B cell (primary cell): ENCODE measurements at regions of chr6 and their contacts with region 1.

Region 1: GRCh38 chr6:27388293-27389197 is at the start of gene ZNF391:
- DNase-seq: peak; percentile 88
- ATAC-seq: peak; percentile 87
- H3K4me3 ChIP-seq: peak within 1 kb of the TSS; percentile 70 to 97 (median 94)
- H3K4me3 Mint-ChIP-seq: peak within 1 kb of the TSS; percentile 99
- H3K27ac ChIP-seq: peak within 1 kb of the TSS; percentile 64 to 83
- H3K27ac Mint-ChIP-seq: peak within 1 kb of the TSS; percentile 98
- H3K4me1 ChIP-seq: peaks cover 10 to 16% of the 10 kb centered on the region in 2 donors
- H3K4me1 Mint-ChIP-seq: peaks cover 17% of the 10 kb centered on the region
- H3K27me3 ChIP-seq: peaks cover 0 to 2% (median 0%) of the 10 kb centered on the region in 4 experiments
- H3K27me3 Mint-ChIP-seq: peaks cover under 1% of the 10 kb centered on the region
- CTCF ChIP-seq: no peak
- total RNA-seq, gene ZNF391: 4.4 and 7.0 TPM in 2 replicates

Region 2: GRCh38 chr6:27374824-27375612 is 13.5 kb before region 1 on chr6:
- CTCF ChIA-PET with region 1: no interaction called
- POLR2A ChIA-PET with region 1: no interaction called
- intact Hi-C with region 1: loop called (anchors 1 kb)
- DNase-seq: peak; percentile 78
- ATAC-seq: peak; percentile 100
- H3K4me3 ChIP-seq: peak overlapping the region in 4 of 5 experiments; percentile 58 to 77 (median 68)
- H3K4me3 Mint-ChIP-seq: peak overlapping the region; percentile 84
- H3K27ac ChIP-seq: no peak overlapping the region
- H3K27ac Mint-ChIP-seq: peak overlapping the region; percentile 42
- H3K4me1 ChIP-seq: peaks cover 8 to 17% of the 10 kb centered on the region in 2 donors
- H3K4me1 Mint-ChIP-seq: peaks cover 16% of the 10 kb centered on the region
- H3K27me3 ChIP-seq: peaks cover 0 to 13% (median 7%) of the 10 kb centered on the region in 4 experiments
- H3K27me3 Mint-ChIP-seq: peaks cover 25% of the 10 kb centered on the region
- CTCF ChIP-seq: no peak

Region 3: DNA sequence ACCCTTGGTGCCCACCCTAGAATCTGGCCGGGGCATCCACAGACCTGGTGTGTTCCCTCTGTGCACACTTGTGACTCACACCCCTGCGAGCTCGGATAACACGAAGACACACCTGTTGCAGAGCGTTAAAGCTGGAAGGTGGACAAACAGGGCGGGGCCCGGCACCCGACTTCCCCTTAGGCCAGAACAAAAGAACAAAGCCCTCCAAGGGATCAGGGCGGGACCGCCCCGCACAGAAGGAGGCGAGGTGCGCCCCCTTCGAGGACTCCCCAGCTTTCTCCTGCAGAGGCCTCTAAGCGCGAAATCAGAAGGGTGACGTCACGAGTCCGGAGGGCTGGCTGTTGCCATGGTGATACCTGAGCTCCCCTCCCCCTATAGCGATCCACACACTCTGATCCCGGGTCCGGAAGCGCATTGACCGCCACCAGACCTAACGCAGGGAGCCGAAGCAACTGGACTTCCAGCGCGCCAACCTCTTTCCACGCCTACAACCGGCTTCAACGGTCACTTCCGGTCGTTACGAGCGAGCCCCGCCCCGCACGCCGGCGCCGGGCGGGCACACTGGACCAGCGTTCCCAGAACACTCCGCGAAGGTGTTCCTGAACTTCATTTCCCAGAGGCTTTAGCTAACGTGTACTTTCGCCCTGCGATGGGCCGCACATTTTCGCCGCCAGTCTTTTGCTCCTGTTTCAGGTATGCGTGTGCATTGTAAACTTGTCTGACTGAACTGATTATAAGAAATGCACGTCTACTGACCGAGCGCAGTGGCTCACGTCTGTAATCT is 84.3 kb after region 1 on chr6 and contains the start of gene ZNF184:
- CTCF ChIA-PET with region 1: no interaction called
- POLR2A ChIA-PET with region 1: interaction called, 4 read pairs
- intact Hi-C with region 1: loop called (anchors 1 kb)
- DNase-seq: peak; percentile 96
- ATAC-seq: peak; percentile 92
- H3K4me3 ChIP-seq: peak within 1 kb of the TSS; percentile 75 to 93 (median 83)
- H3K4me3 Mint-ChIP-seq: peak within 1 kb of the TSS; percentile 100
- H3K27ac ChIP-seq: peak within 1 kb of the TSS; percentile 89 to 97
- H3K27ac Mint-ChIP-seq: peak within 1 kb of the TSS; percentile 99
- H3K4me1 ChIP-seq: peaks cover 16 to 22% of the 10 kb centered on the region in 2 donors
- H3K4me1 Mint-ChIP-seq: peaks cover 44% of the 10 kb centered on the region
- H3K27me3 ChIP-seq: no peaks in the 10 kb centered on the region
- H3K27me3 Mint-ChIP-seq: no peaks in the 10 kb centered on the region
- CTCF ChIP-seq: peak; percentile 31
- total RNA-seq, gene ZNF184: 11.8 TPM in 2 replicates